ENCODE measurements at regions of chr20 and their contacts with region 1.

Region 1: DNA sequence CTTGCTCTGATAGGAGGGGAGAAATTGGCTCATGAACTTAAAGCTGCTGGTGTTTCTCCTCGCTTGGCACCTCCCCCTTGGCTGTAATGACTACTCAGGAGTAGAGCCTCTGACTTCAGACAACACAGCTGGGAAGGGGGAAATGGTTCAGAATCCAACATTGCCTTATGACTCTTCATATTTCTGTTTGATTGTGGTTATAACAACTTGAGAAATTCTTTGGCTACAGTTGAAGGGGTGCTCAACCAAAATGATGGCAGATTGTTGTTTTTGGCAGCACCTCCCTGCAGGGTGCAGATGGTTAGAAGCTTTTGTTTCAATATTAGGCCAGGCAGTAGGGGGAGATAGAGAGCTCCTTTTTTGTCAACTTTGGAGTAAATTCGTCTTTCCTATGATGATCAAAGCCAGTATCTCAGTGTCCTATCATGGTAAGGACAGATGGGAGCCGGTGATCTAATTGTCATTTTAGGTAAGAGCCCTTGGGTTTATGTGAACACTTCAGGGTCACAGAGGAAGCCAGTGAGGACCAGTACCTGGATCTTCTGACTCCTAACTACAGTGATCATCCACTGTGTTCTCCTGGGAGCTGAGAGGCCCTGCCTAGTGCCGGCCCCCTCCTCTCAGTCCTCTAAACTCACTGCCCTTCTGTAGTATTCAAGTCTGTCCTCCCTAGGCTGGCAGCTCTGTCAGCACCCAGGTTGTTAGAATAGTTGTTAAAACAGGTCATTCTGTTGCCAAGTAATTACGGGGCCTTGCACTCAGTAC is 39.9 kb downstream of the RPRD1B start:
- DNase-seq: no peak
- ATAC-seq: peak; percentile 91
- H3K4me3 ChIP-seq: no peak overlapping the region
- H3K27ac ChIP-seq: peak overlapping the region; percentile 63
- H3K4me1 ChIP-seq: peaks cover 29% of the 10 kb centered on the region
- H3K27me3 ChIP-seq: no peaks in the 10 kb centered on the region
- CTCF ChIP-seq: peak; percentile 73

Region 2: GRCh38 chr20:37880726-37881591 is 192.5 kb before region 1 on chr20:
- intact Hi-C with region 1: no loop called
- DNase-seq: no peak
- ATAC-seq: no peak
- H3K4me3 ChIP-seq: no peak overlapping the region
- H3K27ac ChIP-seq: no peak overlapping the region
- H3K4me1 ChIP-seq: no peaks in the 10 kb centered on the region
- H3K27me3 ChIP-seq: no peaks in the 10 kb centered on the region
- CTCF ChIP-seq: no peak

Region 3: DNA sequence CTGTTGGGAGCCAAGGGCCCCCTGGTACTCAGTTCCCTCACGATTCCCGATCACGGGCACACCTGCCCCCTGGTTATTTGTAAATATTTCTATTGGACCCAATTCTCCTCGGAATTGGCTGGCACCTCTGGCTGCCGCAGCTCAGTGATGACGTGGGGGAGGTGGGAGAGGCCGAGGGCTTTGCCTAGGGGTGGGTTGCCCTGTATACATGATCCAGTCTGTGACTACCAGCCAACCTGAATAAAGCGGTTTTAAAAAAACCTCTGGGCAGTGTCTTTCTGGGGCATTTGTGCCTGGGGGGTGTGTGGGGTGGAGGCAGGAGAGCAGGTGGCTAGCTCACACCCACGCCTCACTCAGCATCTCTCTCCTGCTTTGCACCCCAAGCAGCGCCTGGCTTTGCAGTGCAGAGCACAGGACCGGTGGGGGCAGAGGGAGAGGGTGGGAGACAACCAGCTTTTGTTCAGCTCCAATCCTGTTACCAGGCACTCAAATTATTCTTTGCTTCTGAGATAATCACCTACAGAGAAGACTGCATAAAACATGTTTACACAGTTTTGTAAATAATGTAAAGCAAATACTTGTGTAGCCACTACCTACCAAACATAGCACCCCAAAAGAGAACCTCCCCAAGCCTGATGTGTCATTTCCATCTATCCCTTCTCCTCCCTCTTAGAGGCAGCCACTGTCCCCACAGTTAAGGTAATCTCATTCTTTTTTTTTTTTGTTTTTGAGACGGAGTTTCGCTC is 128.2 kb before region 1 on chr20:
- intact Hi-C with region 1: no loop called
- DNase-seq: no peak
- ATAC-seq: no peak
- H3K4me3 ChIP-seq: no peak overlapping the region
- H3K27ac ChIP-seq: no peak overlapping the region
- H3K4me1 ChIP-seq: no peaks in the 10 kb centered on the region
- H3K27me3 ChIP-seq: no peaks in the 10 kb centered on the region
- CTCF ChIP-seq: no peak

Region 4: GRCh38 chr20:38001173-38001872 is 72.2 kb before region 1 on chr20:
- intact Hi-C with region 1: no loop called
- DNase-seq: no peak
- ATAC-seq: no peak
- H3K4me3 ChIP-seq: no peak overlapping the region
- H3K27ac ChIP-seq: no peak overlapping the region
- H3K4me1 ChIP-seq: no peaks in the 10 kb centered on the region
- H3K27me3 ChIP-seq: no peaks in the 10 kb centered on the region
- CTCF ChIP-seq: no peak

Region 5: GRCh38 chr20:38127011-38127621 is 53.6 kb after region 1 on chr20:
- intact Hi-C with region 1: loop called (anchors 10 kb)
- DNase-seq: peak; percentile 59
- ATAC-seq: peak; percentile 35
- H3K4me3 ChIP-seq: no peak overlapping the region
- H3K27ac ChIP-seq: peak overlapping the region; percentile 73
- H3K4me1 ChIP-seq: peaks cover 20% of the 10 kb centered on the region
- H3K27me3 ChIP-seq: no peaks in the 10 kb centered on the region
- CTCF ChIP-seq: no peak

Region 6: GRCh38 chr20:38164624-38165088 is 91.2 kb after region 1 on chr20:
- intact Hi-C with region 1: loop called (anchors 5 kb)
- DNase-seq: no peak
- ATAC-seq: no peak
- H3K4me3 ChIP-seq: peak overlapping the region; percentile 63
- H3K27ac ChIP-seq: peak overlapping the region; percentile 77
- H3K4me1 ChIP-seq: peaks cover 68% of the 10 kb centered on the region
- H3K27me3 ChIP-seq: no peaks in the 10 kb centered on the region
- CTCF ChIP-seq: no peak

Measured in upper lobe of right lung (tissue), 1 donor.